Dorsolateral prefrontal cortex (tissue), 120 donors: ENCODE measurements at regions of chr15 and their contacts with region 1.

Region 1: DNA sequence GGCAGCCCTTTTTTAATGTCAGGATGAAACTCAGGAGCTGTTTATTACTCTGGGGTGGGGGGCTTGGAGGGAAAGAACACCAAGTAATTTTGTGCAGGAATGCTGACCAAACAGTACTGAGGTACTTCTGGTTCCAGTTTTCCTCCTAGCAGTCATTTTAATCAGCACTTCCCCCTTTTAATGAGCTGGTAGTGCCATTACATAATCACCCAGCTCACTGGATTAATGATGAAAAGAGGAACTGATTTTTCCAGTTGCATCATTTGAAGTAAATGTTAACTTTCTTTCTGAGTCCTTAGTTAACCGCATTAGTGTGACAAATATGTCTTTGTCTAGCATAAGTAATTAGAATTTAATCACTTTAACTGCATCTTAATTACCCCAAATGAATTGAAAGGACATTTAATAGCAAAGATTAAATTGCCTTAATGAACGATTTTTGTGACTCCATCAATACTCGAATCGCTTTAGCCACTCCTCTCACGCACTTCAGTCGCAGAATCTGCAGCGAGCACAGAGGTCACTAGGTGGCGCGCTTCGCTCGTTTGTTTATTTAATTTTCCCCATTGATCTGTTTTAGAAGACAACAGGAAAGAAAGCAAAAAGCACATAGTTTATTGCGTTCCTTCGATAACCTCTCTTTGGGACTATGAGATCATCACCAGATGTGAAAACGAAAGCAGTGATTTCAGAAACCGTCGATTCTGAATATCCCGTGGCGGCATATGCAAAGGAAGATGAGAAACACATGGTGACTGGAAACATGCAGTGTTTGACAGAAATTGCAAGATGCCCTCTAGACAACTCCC is 9.8 kb downstream of the ONECUT1 start:
- DNase-seq: peak in 7 of 10 donors; percentile 43 to 77 (median 73)
- H3K4me3 ChIP-seq: peak overlapping the region in 24 of 59 donors; percentile 5 to 49 (median 26)
- H3K27ac ChIP-seq: no peak overlapping the region
- H3K27me3 ChIP-seq: peaks cover 13 to 99% (median 85%) of the 10 kb centered on the region in 45 donors
- CTCF ChIP-seq: peak; percentile 73 to 98 (median 89)

Region 2: DNA sequence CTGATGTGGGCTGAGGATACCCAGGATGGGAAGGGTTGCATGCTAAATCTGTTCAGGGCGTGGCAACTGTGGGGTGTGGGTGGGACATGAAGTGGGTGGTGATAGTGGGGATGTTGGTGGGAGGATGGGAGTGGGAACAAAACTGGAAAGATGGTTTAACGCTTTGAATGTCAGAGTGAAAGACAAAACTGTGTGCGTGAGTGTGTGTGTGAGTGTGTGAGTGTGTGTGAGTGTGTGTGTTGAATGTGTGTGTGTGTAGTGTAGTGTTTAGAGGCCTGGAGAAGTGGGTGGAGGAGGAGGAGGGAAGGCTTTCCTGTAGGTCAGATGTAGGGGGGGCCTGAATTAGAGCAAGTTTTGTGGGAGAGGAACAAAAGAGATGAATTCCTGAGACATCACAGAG is 54.0 kb after region 1 on chr15:
- intact Hi-C with region 1: no loop called
- DNase-seq: no peak
- H3K4me3 ChIP-seq: no peak overlapping the region
- H3K27ac ChIP-seq: no peak overlapping the region
- H3K27me3 ChIP-seq: peaks cover 0 to 7% (median 0%) of the 10 kb centered on the region in 45 donors
- CTCF ChIP-seq: no peak

Region 3: DNA sequence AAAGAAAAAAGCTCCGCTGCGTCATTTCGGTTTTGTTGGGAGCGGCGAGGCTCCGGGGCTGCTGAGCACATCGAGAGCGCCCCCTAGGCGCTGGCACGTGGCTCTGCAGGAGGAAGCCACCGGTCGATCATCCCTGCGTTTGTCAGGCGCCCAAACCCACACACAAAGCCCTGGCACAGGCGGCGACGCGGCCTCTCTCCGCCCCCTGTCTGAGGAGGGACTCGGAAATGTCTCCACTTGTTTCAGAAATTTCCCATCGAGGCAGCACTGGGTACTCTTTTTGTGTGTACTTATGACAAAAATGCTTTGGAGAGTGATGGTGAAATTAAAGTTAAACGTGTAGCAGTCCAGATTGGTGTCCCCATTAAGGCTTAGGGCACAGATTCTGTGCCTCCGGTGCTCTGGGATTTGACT is 417.1 kb after region 1 on chr15:
- intact Hi-C with region 1: loop called (anchors 5 to 10 kb)
- DNase-seq: peak; percentile 41 to 81 (median 60)
- H3K4me3 ChIP-seq: peak overlapping the region in 53 of 59 donors; percentile 0 to 62 (median 37)
- H3K27ac ChIP-seq: no peak overlapping the region
- H3K27me3 ChIP-seq: peaks cover 0 to 36% (median 0%) of the 10 kb centered on the region in 45 donors
- CTCF ChIP-seq: peak; percentile 59 to 94 (median 87)

Region 4: DNA sequence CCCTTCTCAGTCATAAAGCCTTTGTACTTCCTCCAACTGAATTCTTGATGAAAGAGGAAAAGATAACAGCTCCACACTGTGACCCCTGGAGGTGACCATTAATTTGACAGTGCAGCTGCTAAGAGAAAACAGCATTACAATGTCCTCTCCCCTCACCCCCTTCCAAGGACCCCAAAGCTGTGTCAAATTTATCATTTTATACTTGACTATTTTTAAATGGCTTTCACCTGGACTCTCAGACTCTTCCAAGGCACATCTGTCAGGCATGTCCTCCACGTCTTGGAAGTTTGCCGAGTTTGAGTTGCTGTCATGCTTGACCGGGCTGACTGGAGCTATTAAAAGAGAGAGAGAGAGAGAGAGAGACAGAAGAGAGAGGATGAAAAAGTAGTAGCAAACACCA is 742.6 kb after region 1 on chr15:
- intact Hi-C with region 1: loop called in 1 of 2 experiments (anchors 10 kb)
- DNase-seq: no peak
- H3K4me3 ChIP-seq: no peak overlapping the region
- H3K27ac ChIP-seq: no peak overlapping the region
- H3K27me3 ChIP-seq: peaks cover 0 to 4% (median 0%) of the 10 kb centered on the region in 45 donors
- CTCF ChIP-seq: no peak

Region 5: GRCh38 chr15:53716909-53717876 is 936.8 kb after region 1 on chr15:
- intact Hi-C with region 1: loop called (anchors 5 kb)
- DNase-seq: no peak
- H3K4me3 ChIP-seq: no peak overlapping the region
- H3K27ac ChIP-seq: no peak overlapping the region
- H3K27me3 ChIP-seq: peaks cover 0 to 42% (median 6%) of the 10 kb centered on the region in 45 donors
- CTCF ChIP-seq: peak in 55 of 56 donors; percentile 12 to 75 (median 53)